ENCODE measurements at regions of chr7 and their contacts with region 1.

Region 1: GRCh38 chr7:87797798-87798403 is 78.3 kb downstream of the SLC25A40 start:
- DNase-seq: no peak
- ATAC-seq: no peak

Region 2: DNA sequence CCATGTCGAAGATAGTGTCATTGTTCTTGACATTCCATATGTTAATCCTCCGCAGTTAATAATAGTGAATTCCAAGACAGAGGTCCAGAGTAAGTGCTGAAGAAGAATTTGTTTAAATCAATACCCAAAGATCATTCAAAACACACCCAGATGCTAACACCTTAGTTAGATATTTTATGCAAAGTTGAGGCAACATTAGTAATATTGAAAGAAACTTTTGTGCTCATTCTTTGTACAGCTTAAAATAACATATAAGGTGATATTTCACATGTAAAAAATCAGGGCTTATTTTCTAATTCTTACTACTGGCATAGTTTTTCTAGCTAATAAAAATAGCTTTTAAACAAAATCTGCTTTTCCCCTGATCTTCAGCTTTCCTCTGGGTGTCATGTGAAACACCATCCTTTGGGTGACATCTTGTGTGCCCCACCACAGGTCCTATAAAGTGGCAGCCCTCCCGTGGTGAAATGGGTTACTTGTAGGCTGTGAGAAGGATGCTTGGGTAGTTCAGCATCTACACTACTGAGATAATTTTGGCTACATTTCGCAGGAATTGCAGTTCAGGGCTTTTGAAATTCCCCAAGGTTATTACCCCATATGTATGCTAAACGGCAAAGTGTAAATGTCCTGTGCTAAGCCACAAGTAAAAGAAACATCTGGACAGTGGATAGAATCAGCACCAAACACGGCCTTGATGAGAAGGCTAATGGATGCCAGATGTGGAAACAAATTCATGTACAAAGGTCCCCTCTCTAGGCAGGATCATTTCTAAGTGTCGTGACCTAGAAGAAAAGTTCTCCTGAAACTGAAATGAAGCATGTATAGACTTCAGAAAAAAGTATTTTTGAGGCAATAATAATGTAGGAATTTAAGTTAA is 1048.8 kb before region 1 on chr7:
- intact Hi-C with region 1: no loop called
- DNase-seq: no peak
- ATAC-seq: peak; percentile 49

Region 3: GRCh38 chr7:87886875-87887274 is 89.0 kb after region 1 on chr7:
- intact Hi-C with region 1: loop called (anchors 5 kb)
- DNase-seq: no peak
- ATAC-seq: no peak

Region 4: GRCh38 chr7:88111136-88111743 is 313.3 kb after region 1 on chr7:
- intact Hi-C with region 1: loop called (anchors 5 kb)
- DNase-seq: no peak
- ATAC-seq: peak; percentile 49

Region 5: DNA sequence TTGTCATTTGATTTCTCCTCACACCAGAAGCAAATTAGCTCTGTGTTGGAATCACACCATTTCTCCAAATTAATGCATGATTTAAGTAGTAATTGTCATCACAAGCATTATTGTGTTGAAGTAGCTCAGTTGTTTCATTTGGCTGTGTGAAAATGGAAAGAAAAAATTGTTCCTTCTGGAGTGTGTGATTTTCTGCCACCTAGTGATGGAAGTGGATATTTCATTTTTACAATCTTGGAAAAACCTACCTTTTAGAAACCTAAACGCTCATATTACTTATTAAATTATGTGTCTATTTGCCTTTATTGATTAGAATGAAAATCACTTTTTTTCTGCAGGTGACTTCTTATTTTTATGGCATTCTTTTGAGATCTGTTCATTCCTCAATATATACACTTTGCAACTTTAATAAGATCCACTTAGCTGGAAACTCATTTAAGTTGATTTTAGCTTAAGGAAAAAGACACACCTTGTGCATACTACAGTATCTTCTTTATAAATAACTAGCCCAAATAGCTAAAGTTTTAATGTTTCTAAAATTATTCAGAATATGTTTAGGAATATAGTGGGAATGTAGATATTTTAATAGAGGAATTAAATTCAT is 371.9 kb after region 1 on chr7:
- intact Hi-C with region 1: loop called (anchors 10 kb)
- DNase-seq: no peak
- ATAC-seq: no peak

Measured in left ventricle myocardium superior (tissue), 1 donor.